ENCODE measurements at regions of chr22 and their contacts with region 1.

Region 1: GRCh38 chr22:43090130-43090789 is 1.1 kb upstream of the TTLL1 start:
- DNase-seq: peak; percentile 46 to 52
- H3K4me3 ChIP-seq: no peak overlapping the region
- H3K27ac ChIP-seq: no peak overlapping the region
- H3K4me1 ChIP-seq: peaks cover 9 to 15% of the 10 kb centered on the region in 2 donors
- H3K27me3 ChIP-seq: no peaks in the 10 kb centered on the region
- CTCF ChIP-seq: peak in 4 of 6 experiments; percentile 16 to 35 (median 33)
- POLR2A ChIP-seq: no peak

Region 2: DNA sequence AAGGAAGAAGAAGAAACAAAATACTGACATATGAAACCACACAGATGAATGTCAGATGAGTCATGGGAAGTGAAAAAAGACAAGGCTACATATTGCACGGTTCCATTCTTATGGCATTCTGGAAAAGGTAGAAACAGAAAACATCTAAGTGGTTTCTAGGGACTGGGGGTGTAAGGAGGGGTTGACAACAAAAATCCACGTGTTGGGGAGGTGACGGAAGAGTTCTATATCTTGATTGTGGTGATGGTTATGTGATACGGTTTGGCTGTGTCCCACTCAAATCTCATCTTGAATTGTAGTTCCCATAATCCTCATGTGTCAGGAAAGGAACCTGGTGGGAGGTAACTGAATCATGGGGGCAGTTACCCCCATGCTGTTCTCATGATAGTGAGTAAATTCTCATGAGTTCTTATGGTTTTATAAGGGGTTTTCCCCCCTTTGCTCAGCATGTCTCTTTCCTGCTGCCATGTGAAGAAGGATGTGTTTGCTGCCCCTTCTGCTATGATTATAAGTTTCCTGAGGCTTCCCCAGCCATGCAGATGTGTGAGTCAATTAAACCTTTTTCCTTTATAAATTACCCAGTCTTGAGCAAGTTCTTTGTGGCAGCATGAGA is 226.8 kb before region 1 on chr22:
- intact Hi-C with region 1: loop called (anchors 10 kb)
- DNase-seq: no peak
- H3K4me3 ChIP-seq: no peak overlapping the region
- H3K27ac ChIP-seq: no peak overlapping the region
- H3K4me1 ChIP-seq: peaks cover 12 to 18% of the 10 kb centered on the region in 2 donors
- H3K27me3 ChIP-seq: no peaks in the 10 kb centered on the region
- CTCF ChIP-seq: no peak
- POLR2A ChIP-seq: no peak

Measured in thyroid gland (tissue), 4 donors.